GM12878 (cell line): ENCODE measurements at regions of chr7 and their contacts with region 1.

Region 1: DNA sequence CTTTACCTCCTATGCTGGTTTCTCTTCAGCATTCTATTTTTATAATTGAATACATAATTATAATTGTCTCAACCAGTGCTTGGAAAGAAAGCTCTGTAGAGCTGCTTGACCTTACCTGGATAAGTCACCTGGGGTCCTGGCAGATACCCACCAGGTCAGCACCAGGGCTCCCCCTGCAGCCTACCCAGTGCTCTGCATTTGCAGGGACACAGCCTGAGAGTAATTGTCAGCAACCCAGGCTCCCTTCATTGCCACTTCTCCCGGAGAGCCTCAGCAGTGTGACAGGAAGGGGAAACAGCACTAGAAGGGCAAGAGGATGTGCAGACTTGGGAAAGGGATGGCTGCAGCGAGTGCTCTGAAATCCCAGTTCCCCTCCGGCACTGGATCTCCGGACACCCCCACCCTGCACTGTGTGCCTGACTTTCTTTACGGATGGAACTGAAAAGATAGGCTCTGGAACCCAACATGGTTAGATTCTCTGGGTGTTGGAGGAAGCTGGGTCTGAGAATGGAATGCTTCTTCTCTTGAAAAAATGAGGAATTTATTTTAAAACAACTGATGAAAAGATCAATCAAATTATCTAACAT is 11.4 kb upstream of the PAX4 start:
- DNase-seq: no peak
- ATAC-seq: peak; percentile 96
- H3K4me3 ChIP-seq: no peak overlapping the region
- H3K27ac ChIP-seq: no peak overlapping the region
- H3K4me1 ChIP-seq: no peaks in the 10 kb centered on the region
- H3K27me3 ChIP-seq: no peaks in the 10 kb centered on the region
- CTCF ChIP-seq: peak; percentile 57 to 67 (median 62)
- EP300 ChIP-seq: no peak
- POLR2A ChIP-seq: no peak
- RAD21 ChIP-seq: peak; percentile 39; the same call in 1 of the 2 replicates

Region 2: DNA sequence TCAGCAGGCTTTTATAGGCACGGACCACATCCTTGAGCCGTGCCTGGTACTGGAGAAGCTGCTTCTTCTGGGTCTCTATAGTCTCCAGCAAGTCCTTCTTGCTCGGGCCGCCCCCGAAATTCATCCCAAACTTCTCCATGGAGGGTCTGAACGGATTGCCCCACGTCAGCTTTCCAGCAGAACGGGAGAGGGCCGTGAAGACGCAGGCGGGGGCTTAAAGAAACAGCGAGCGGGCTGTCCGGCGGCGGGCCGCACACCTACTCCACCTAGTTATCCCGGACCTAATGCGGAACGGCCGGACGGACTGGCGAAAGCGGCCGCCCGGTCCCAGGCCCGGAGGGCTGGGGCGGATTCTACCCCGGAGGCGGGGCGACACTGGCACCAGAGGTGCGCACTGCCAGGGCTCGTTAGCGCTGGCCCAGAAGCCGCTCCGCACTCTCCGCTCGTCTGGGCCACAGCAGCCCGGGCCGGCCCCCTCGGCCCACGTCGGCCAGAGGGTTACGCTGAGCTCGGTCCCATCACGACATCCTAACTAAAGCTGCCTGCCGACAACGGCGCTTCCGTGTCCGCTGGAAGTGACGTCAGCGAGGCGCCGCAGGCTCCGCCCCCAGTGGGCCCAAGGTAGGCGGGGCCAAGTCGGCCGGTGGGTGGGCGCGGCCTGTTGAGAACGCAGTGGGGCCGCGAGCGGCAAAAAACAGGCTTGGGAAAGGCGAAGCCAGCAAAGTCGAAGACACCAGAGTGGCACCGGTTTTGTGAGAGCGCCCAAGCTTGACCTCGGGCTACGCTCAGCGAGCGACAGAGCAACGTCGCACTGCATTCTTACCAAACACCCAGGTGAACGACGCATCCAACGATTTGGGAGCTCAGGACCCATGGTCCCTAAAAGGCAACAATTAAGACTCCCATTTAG is 44.1 kb before region 1 on chr7 and contains the start of gene GCC1:
- CTCF ChIA-PET with region 1: interaction called, 17 read pairs
- POLR2A ChIA-PET with region 1: no interaction called
- RAD21 ChIA-PET with region 1: interaction called, 3 read pairs
- SMC1A ChIA-PET with region 1: interaction called, 13 read pairs
- in situ Hi-C with region 1: no loop called
- intact Hi-C with region 1: no loop called
- DNase-seq: peak; percentile 52
- ATAC-seq: peak; percentile 84
- H3K4me3 ChIP-seq: peak within 1 kb of the TSS; percentile 97
- H3K27ac ChIP-seq: peak within 1 kb of the TSS; percentile 74
- H3K4me1 ChIP-seq: peaks cover 15% of the 10 kb centered on the region
- H3K27me3 ChIP-seq: no peaks in the 10 kb centered on the region
- CTCF ChIP-seq: no peak
- EP300 ChIP-seq: no peak
- POLR2A ChIP-seq: peak; percentile 95
- RAD21 ChIP-seq: no peak
- polyA plus RNA-seq, gene GCC1: 1.8 to 2.7 TPM

Region 3: GRCh38 chr7:127798023-127798422 is 168.7 kb after region 1 on chr7:
- CTCF ChIA-PET with region 1: no interaction called
- POLR2A ChIA-PET with region 1: no interaction called
- RAD21 ChIA-PET with region 1: no interaction called
- SMC1A ChIA-PET with region 1: no interaction called
- in situ Hi-C with region 1: no loop called
- intact Hi-C with region 1: no loop called
- DNase-seq: no peak
- ATAC-seq: no peak
- H3K4me3 ChIP-seq: no peak overlapping the region
- H3K27ac ChIP-seq: no peak overlapping the region
- H3K4me1 ChIP-seq: peaks cover 5% of the 10 kb centered on the region; the same call in 1 of the 2 replicates
- H3K27me3 ChIP-seq: no peaks in the 10 kb centered on the region
- CTCF ChIP-seq: no peak
- EP300 ChIP-seq: no peak
- POLR2A ChIP-seq: no peak
- RAD21 ChIP-seq: no peak